ENCODE measurements at regions of chr1 and their contacts with region 1.

Region 1: GRCh38 chr1:54800899-54801759 is at the start of gene TTC22:
- DNase-seq: peak; percentile 63
- H3K4me3 Mint-ChIP-seq: peak within 1 kb of the TSS; percentile 79
- H3K27ac Mint-ChIP-seq: no peak within 1 kb of the TSS
- H3K4me1 Mint-ChIP-seq: peaks cover 38% of the 10 kb centered on the region
- H3K27me3 Mint-ChIP-seq: no peaks in the 10 kb centered on the region
- total RNA-seq, gene TTC22: 0.76 and 1.3 TPM in 2 replicates

Region 2: GRCh38 chr1:54542120-54542961 is 258.8 kb before region 1 on chr1:
- intact Hi-C with region 1: loop called (anchors 5 kb)
- DNase-seq: peak; percentile 55
- H3K4me3 Mint-ChIP-seq: peak overlapping the region; percentile 75
- H3K27ac Mint-ChIP-seq: peak overlapping the region; percentile 52
- H3K4me1 Mint-ChIP-seq: peaks cover 11% of the 10 kb centered on the region
- H3K27me3 Mint-ChIP-seq: peaks cover 14% of the 10 kb centered on the region

Region 3: DNA sequence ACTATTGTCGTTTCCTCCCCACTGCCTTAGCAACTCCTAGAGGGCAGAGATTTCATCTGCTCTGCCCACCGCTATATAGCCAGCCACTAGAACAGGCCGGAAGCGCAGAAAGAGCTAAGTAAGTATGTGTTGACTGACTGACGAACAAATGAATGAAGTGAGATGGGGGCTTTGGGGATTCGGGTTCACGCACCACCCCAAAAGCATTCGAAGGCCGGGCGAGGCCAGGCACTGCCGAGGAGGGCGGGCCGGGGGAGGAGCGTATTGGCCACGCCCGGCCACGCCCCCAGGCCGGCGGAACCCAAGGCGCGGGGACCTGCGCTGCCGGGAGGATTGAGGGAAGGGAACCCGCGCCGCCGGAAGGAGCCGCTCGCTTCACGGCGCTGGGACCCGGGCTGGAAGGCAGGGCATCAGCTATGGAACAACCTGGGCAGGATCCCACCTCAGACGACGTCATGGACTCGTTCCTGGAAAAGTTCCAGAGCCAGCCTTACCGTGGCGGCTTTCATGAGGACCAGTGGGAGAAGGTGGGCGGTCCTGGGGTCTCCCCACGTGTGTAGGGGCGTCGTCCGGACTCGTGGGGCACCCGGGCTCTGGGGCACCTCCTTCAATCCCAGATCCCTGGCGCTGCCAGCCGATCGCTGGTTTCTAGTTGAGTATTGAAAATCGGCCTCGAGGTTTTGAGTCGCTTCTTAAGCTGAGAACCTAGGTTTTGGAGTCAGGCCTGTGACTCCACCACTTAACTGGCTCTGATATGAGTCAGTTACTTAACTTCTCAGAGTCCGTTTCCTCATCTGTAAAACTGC is 85.4 kb before region 1 on chr1 and contains the start of gene TTC4:
- intact Hi-C with region 1: loop called (anchors 2 kb)
- DNase-seq: peak; percentile 81
- H3K4me3 Mint-ChIP-seq: peak within 1 kb of the TSS; percentile 88
- H3K27ac Mint-ChIP-seq: peak within 1 kb of the TSS; percentile 88
- H3K4me1 Mint-ChIP-seq: peaks cover 29% of the 10 kb centered on the region
- H3K27me3 Mint-ChIP-seq: no peaks in the 10 kb centered on the region
- total RNA-seq, gene TTC4: 36.6 and 38.2 TPM in 2 replicates

Region 4: GRCh38 chr1:54764133-54764921 is 36.8 kb before region 1 on chr1 and contains the start of gene PARS2:
- intact Hi-C with region 1: loop called (anchors 2 kb)
- DNase-seq: peak; percentile 94
- H3K4me3 Mint-ChIP-seq: peak within 1 kb of the TSS; percentile 88
- H3K27ac Mint-ChIP-seq: peak within 1 kb of the TSS; percentile 89
- H3K4me1 Mint-ChIP-seq: peaks cover 12% of the 10 kb centered on the region
- H3K27me3 Mint-ChIP-seq: no peaks in the 10 kb centered on the region
- total RNA-seq, gene PARS2: 6.1 and 6.4 TPM in 2 replicates

Measured in activated T-helper 2 cell treated with anti-CD3 and anti-CD28 coated beads, Interferon-gamma antibody, Interleukin-2, Interleukin-4, amounts not matched to agents 10 μg/mL and 5 μg/mL and 100 μg/mL, durations not matched to agents 14 hours and 24 hours and 36 hours (primary cell).